ENCODE measurements at regions of chr17 and their contacts with region 1.

Region 1: DNA sequence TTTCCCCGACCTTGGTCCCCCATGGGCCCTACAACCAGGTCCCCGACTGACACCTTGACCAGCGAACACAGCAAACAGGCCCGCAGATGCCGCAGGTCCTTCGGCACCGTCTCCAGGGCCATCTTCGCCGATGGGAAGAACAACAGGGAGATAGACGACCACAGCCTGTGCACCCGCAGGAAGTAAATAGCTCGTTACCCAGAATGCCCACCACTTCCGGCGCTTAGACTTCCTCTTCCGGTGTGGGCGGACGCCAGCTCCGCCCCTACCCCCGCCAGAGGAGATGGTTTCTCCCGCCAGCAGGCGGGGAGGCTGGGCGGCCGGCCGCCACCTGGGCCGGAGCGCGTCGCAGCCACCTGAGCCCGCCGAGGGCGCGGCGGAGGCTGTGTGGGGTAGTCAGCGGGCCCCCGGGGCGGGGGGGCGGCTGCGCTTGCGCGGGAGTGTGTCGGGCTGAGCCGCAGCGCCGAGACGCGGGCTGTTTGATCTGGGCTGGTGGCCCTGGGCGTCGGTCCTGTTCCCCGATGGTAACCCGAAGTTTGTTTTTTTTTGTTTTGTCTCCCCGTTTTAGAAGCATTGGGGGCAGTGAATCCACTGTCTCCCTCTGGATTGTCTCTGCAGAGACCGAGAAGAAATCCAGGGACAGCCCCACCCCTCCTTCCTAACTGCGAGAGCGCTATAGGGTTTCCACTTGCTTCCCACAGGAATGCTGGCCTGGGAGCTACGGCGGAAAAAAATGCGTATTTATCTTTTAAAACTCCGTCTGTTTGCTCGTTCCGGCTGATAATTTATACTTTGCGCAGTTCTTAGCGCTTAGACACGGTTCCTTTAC is at the start of gene SUPT4H1:
- DNase-seq: peak; percentile 95 to 99
- ATAC-seq: peak; percentile 97 to 99
- H3K4me3 ChIP-seq: peak within 1 kb of the TSS; percentile 83
- H3K27ac ChIP-seq: peak within 1 kb of the TSS; percentile 88 to 92
- H3K4me1 ChIP-seq: peaks cover 9% of the 10 kb centered on the region; the same call in 2 of the 3 replicates
- CTCF ChIP-seq: peak; percentile 4; the same call in 1 of the 3 replicates
- EP300 ChIP-seq: no peak; a peak in 1 of 5 replicates
- POLR2A ChIP-seq: peak; percentile 92
- RAD21 ChIP-seq: peak in 1 of 2 experiments; percentile 68; a peak in 3 of 5 replicates
- polyA plus RNA-seq, gene SUPT4H1: 241 and 260 TPM in 2 replicates

Region 2: DNA sequence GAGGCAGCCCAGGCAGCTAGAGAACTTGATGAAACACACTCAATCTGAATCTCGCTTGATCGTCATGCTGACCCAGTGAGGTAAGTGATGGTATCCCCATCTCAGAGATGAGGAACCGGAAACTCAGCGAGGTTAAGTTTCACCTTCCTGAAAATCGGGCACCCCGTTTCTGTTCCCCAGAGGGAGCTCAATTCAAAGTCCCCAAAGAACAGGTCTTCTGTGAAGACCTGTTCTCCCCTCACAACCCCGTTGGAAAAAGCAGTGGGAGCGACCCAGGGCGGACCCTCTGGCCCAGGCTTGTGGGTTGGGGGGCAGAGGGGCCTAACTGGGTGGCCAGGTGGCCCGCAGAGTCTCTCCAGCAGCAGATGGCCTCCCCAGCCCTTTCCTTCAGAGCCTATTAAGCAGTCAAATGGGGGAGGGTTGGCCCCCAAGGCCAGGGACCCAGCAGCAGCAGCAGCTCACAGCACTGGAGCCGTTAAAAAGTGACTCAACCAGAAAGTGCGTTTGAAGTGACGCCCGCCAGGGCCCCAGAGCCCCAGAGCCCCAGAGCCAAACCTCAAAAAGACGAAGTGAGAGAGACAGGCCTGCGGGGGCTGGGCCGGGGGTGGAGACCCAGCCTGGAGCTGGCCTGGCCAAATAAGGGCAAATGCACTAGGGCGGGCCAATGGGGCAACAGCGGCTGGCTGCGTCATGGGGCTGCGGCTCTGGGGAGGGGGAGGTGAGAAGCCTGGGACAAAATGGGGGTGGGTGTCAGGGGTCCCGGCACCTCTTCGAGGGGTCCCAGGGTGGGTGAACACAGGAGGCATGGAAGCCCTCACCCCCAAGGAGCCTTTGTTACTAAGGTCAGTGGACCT is 14.4 kb before region 1 on chr17:
- CTCF ChIA-PET with region 1: interaction called, 13 read pairs
- POLR2A ChIA-PET with region 1: interaction called, 24 read pairs
- DNase-seq: no peak
- ATAC-seq: peak in 1 of 2 experiments; percentile 12; a peak in 1 of 6 replicates
- H3K4me3 ChIP-seq: no peak overlapping the region
- H3K27ac ChIP-seq: 0 out of 6 replicates have a peak overlapping the region, but pooled peaks of 1 of the 2 experiments have one; percentile 9
- H3K4me1 ChIP-seq: 0 out of 3 replicates have a peak, but pooled peaks cover 2% of the 10 kb centered on the region
- CTCF ChIP-seq: no peak
- EP300 ChIP-seq: no peak
- POLR2A ChIP-seq: no peak
- RAD21 ChIP-seq: no peak

Region 3: GRCh38 chr17:58364270-58364942 is 12.2 kb after region 1 on chr17:
- CTCF ChIA-PET with region 1: interaction called, 12 read pairs
- POLR2A ChIA-PET with region 1: interaction called, 9 read pairs
- DNase-seq: no peak
- ATAC-seq: peak in 1 of 2 experiments; percentile 39; a peak in 3 of 6 replicates
- H3K4me3 ChIP-seq: no peak overlapping the region
- H3K27ac ChIP-seq: peak overlapping the region; percentile 26 to 50; a peak in 4 of 6 replicates
- H3K4me1 ChIP-seq: peaks cover 18% of the 10 kb centered on the region
- CTCF ChIP-seq: no peak
- EP300 ChIP-seq: no peak
- POLR2A ChIP-seq: no peak
- RAD21 ChIP-seq: no peak

Region 4: DNA sequence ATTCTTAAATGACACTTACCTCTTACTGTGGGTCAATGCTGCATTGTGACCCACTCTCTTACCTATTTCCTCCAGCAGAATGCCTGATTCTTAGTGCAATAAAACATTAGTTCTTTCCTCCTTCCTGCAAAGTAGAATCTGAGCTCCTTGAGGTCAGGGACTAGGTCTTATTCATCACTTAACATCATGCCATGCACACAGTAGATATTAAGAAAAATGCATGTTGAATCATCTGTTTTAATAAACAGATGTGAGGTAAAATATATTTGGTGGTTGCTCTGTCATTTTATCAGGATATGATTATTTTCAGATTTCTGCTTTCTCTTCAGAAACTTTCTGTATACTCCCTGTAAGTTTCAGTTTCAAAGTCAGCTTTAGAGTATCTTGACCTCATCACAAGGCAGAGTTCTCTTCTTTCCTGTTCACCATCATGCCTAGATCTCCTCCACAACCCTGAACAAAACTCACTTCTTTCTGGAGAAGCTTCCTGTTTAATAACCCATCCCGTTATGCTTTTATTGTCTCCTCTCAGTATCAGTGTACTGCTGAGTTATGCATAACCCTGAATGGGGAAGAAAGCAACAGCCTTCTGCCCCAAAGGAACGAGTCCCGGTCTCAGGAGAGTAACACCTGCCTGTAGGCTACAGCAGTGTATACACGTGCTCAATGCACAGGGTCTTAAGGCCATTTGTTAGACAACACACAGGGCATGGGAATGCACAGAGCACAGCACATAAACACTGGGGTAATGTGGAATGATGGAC is 30.1 kb after region 1 on chr17:
- CTCF ChIA-PET with region 1: interaction called, 8 read pairs
- POLR2A ChIA-PET with region 1: interaction called, 17 read pairs
- DNase-seq: no peak
- ATAC-seq: peak; percentile 15 to 31; a peak in 2 of 6 replicates
- H3K4me3 ChIP-seq: no peak overlapping the region
- H3K27ac ChIP-seq: peak overlapping the region; percentile 70 to 73
- H3K4me1 ChIP-seq: peaks cover 74% of the 10 kb centered on the region
- CTCF ChIP-seq: no peak
- EP300 ChIP-seq: no peak
- POLR2A ChIP-seq: no peak
- RAD21 ChIP-seq: no peak

Region 5: DNA sequence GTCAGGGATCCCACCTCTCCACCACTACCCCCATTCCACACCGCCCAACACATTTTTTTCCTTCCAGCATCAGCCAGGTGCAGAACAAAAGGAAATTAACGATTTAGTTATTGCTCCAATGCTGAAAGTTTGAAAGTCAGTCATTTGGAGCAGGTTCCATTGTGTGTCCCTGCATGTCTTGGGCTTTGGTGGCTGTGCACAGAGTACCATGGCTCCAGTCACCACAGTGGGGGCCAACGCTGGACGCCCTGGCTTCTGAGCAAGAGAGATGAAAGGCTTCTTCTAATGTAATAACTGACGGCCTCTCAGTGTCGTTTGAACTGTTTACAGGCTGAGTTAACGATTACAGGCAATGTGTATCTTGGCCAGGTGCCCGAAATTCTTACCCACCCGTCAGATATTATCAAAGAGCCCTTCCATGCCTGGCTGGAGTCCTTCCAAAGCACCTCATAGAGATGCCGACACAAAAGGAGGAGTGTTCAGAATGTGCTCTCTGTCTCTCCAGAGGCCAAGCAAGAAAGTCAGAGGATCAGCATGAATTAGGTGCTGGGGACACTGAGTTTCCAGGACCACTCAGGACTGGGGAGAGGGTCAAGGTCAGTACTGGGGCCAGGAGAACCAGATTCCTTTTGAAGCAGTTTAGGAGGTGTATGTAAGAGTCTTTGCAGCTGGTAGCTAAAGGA is 39.2 kb after region 1 on chr17:
- CTCF ChIA-PET with region 1: interaction called, 6 read pairs
- POLR2A ChIA-PET with region 1: interaction called, 20 read pairs
- DNase-seq: peak; percentile 67 to 96
- ATAC-seq: peak; percentile 89 to 90
- H3K4me3 ChIP-seq: peak overlapping the region; percentile 4; the same call in 1 of the 3 replicates
- H3K27ac ChIP-seq: peak overlapping the region; percentile 77 to 84
- H3K4me1 ChIP-seq: peaks cover 72% of the 10 kb centered on the region
- CTCF ChIP-seq: no peak
- EP300 ChIP-seq: peak; percentile 90 to 95; a peak in 4 of 5 replicates
- POLR2A ChIP-seq: no peak
- RAD21 ChIP-seq: peak; percentile 24 to 66; a peak in 3 of 5 replicates

Region 6: GRCh38 chr17:58455491-58455890 is 103.3 kb after region 1 on chr17:
- CTCF ChIA-PET with region 1: no interaction called
- POLR2A ChIA-PET with region 1: no interaction called
- DNase-seq: no peak
- ATAC-seq: no peak
- H3K4me3 ChIP-seq: no peak overlapping the region
- H3K27ac ChIP-seq: no peak overlapping the region
- H3K4me1 ChIP-seq: no peaks in the 10 kb centered on the region
- CTCF ChIP-seq: no peak
- EP300 ChIP-seq: no peak
- POLR2A ChIP-seq: no peak
- RAD21 ChIP-seq: no peak

Measured in A549 (cell line).